ENCODE measurements at regions of chr5 and their contacts with region 1.

Region 1: GRCh38 chr5:174724491-174725260 is at the start of gene MSX2:
- DNase-seq: peak; percentile 64
- H3K4me3 ChIP-seq: peak within 1 kb of the TSS; percentile 69
- H3K27ac ChIP-seq: peak within 1 kb of the TSS; percentile 11
- H3K27me3 ChIP-seq: peaks cover 44% of the 10 kb centered on the region
- CTCF ChIP-seq: no peak
- polyA plus RNA-seq, gene MSX2: 7.2 and 9.5 TPM in 2 replicates

Region 2: GRCh38 chr5:174571662-174572397 is 152.8 kb before region 1 on chr5:
- CTCF ChIA-PET with region 1: interaction called, 3 read pairs
- POLR2A ChIA-PET with region 1: interaction called, 12 read pairs
- DNase-seq: peak; percentile 96
- H3K4me3 ChIP-seq: no peak overlapping the region
- H3K27ac ChIP-seq: peak overlapping the region; percentile 62
- H3K27me3 ChIP-seq: no peaks in the 10 kb centered on the region
- CTCF ChIP-seq: peak; percentile 72

Region 3: DNA sequence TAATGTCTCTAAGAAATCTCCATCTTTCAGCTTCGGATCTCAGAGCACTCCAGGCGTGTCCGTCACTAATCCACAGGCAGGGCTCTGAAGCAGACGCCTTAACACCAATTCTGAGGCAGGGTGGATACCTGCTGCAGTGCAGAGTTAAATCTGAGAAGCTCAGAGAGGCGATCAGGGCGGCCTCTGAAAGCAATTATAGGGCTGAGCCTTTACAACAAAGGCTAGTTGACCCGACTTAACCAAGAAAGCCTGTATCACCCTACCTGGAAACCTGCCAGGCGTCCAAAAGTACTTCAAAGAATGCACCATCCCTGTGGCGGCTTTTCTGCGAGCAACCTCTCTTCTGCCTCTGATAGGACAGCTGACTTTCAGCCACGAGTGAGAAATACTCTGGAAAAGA is 135.1 kb before region 1 on chr5:
- CTCF ChIA-PET with region 1: no interaction called
- POLR2A ChIA-PET with region 1: interaction called, 17 read pairs
- DNase-seq: no peak
- H3K4me3 ChIP-seq: no peak overlapping the region
- H3K27ac ChIP-seq: no peak overlapping the region
- H3K27me3 ChIP-seq: no peaks in the 10 kb centered on the region
- CTCF ChIP-seq: no peak

Region 4: GRCh38 chr5:174706997-174707572 is 17.6 kb before region 1 on chr5:
- CTCF ChIA-PET with region 1: no interaction called
- POLR2A ChIA-PET with region 1: interaction called, 15 read pairs
- DNase-seq: peak; percentile 21
- H3K4me3 ChIP-seq: no peak overlapping the region; the same call in 1 of the 2 replicates
- H3K27ac ChIP-seq: no peak overlapping the region
- H3K27me3 ChIP-seq: peaks cover 46% of the 10 kb centered on the region
- CTCF ChIP-seq: no peak

Measured in AG04450 (cell line).